ENCODE measurements at regions of chr13 and their contacts with region 1.

Region 1: DNA sequence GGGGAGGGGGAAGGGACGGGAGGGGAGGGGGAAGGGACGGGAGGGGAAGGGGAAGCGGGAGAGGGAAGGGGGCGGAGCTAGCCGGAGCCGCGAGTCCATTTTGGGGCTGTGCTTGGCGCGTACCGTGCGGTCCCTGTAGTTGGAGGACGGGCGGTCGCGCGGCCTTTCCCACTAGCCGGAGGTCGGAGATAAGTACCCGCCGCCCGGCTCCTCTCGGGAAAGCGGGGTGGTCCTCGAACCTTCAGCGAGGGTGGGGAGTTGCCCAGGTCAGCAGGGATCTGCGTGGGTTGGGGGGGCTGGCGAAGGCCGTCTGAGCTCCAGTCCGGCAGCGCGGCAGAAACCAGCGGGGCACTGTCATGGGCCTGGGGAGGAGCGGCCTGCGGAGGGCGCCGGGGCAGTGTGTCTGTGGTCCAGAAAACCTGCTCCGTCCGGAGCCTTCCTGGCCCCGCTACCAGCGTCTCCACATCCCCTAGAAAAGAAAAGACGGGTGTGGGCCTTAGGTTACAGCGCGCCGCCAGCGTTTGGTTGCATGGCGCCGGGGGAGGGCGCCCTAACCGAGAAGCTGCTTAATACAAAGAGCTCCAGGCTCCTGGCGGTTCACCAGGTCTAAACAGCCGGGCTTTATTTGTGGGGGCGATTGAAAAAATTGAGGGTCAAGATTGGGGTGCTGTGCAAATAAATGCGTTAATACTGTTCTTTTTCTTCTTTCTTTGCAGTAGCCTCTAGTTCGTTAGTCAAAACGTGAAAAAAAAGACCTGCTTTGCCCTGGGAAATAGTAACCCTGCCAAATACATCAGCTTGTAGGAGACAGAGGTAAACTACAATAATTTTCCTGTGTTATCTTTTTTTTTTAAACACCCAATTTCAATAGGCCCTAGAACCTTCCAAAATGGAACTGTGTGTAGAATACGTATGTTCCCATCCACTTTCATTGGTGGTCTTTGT is at the start of gene TRIM13:
- DNase-seq: peak; percentile 88
- H3K4me3 Mint-ChIP-seq: peak within 1 kb of the TSS; percentile 81
- H3K27ac Mint-ChIP-seq: peak within 1 kb of the TSS; percentile 86
- H3K4me1 Mint-ChIP-seq: peaks cover 44% of the 10 kb centered on the region
- H3K27me3 Mint-ChIP-seq: no peaks in the 10 kb centered on the region
- total RNA-seq, gene TRIM13: 9.8 to 11.6 TPM

Region 2: GRCh38 chr13:49836516-49836915 is 160.7 kb before region 1 on chr13:
- CTCF ChIA-PET with region 1: no interaction called
- POLR2A ChIA-PET with region 1: no interaction called
- intact Hi-C with region 1: no loop called
- DNase-seq: no peak
- H3K4me3 Mint-ChIP-seq: no peak overlapping the region
- H3K27ac Mint-ChIP-seq: no peak overlapping the region
- H3K4me1 Mint-ChIP-seq: no peaks in the 10 kb centered on the region
- H3K27me3 Mint-ChIP-seq: peaks cover 3% of the 10 kb centered on the region

Region 3: DNA sequence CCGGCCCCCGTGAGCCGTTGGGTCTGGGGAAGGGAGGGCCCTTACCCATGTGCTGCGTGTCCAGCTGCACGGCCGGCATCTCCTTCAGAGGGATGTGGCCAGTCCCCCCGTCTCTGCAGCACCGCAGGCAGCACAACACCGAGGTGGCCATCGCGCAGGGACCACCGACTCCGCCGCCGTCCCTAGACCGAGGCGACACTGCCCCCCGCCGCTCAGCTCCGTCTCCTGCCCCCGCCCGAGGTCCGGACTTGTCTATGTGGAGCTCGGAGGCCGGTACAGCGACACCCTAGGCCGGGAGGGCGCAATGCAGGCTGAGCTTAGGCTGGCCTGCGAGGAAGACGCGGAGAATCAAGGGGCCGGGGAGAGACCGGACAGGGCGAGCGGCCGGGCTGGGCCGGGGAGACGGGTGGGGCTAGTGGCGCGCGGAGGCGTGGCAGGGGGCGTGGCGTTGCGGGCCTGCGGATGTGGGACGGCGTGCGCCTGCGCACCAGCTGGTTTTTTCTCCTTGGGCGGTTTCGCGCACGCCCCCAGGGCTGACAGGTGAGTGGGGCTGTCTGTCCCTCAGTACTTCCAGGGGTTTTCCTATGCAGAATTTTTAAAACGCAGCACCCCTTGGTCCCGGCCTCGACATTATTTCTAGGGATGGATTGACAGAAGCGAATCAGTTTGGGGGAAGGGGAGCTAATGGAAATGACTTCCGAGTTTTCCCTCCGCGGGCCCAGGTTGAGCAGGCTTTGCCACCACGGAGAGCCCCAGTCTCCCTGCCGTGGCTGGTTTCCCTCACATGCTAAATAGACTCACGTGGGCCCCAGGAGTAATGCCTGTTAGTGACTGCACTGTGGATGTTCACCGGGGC is 60.9 kb before region 1 on chr13 and contains the start of gene SPRYD7:
- CTCF ChIA-PET with region 1: interaction called, 18 read pairs
- POLR2A ChIA-PET with region 1: interaction called, 7 read pairs
- intact Hi-C with region 1: loop called (anchors 1 kb)
- DNase-seq: peak; percentile 97
- H3K4me3 Mint-ChIP-seq: peak within 1 kb of the TSS; percentile 92
- H3K27ac Mint-ChIP-seq: peak within 1 kb of the TSS; percentile 77
- H3K4me1 Mint-ChIP-seq: peaks cover 12% of the 10 kb centered on the region
- H3K27me3 Mint-ChIP-seq: no peaks in the 10 kb centered on the region
- total RNA-seq, gene SPRYD7: 4.9 to 5.4 TPM

Region 4: GRCh38 chr13:50015258-50015657 is 18.0 kb after region 1 on chr13 and contains the start of gene KCNRG:
- CTCF ChIA-PET with region 1: interaction called, 11 read pairs
- POLR2A ChIA-PET with region 1: interaction called, 3 read pairs
- intact Hi-C with region 1: no loop called
- DNase-seq: no peak
- H3K4me3 Mint-ChIP-seq: no peak within 1 kb of the TSS
- H3K27ac Mint-ChIP-seq: no peak within 1 kb of the TSS
- H3K4me1 Mint-ChIP-seq: peaks cover 33% of the 10 kb centered on the region
- H3K27me3 Mint-ChIP-seq: no peaks in the 10 kb centered on the region
- total RNA-seq, gene KCNRG: not detected

Region 5: DNA sequence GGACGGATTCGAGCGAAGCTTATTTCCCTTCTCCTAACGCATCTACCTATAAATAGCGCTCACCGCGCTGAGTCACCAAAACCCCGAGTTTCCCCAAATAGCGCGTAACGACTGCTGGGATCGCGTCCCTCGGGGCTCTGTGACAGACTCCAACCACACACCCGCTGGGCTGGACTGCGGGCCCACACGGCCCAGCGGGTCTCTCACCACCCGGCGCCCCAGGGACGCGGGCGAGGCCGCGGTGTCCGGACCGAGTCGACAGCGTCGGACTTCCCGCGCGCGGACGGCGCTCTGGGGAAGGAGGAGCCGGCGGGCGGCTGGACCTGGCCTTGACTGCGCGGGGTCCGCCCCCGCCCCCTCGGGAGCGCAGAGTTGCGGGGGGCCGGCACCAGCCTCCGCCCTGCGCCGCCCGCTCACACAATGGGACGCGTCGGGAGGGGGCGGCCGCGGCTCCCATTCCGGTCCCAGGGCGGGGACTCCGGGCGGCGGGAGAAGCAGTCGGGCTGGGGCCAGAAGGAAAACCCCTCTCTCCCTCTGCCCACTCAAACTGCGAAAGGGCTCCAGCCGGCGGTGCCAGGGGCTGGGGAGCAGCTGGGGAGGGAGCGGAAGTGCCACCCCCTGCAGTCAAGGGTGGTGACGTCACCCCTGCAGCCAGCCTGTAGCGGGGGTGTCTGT is 126.8 kb after region 1 on chr13:
- CTCF ChIA-PET with region 1: interaction called, 20 read pairs
- POLR2A ChIA-PET with region 1: interaction called, 17 read pairs
- intact Hi-C with region 1: loop called (anchors 1 kb)
- DNase-seq: peak; percentile 88
- H3K4me3 Mint-ChIP-seq: peak overlapping the region; percentile 81
- H3K27ac Mint-ChIP-seq: peak overlapping the region; percentile 90
- H3K4me1 Mint-ChIP-seq: peaks cover 58% of the 10 kb centered on the region
- H3K27me3 Mint-ChIP-seq: peaks cover 16% of the 10 kb centered on the region

Region 6: GRCh38 chr13:50236898-50237318 is 239.7 kb after region 1 on chr13:
- CTCF ChIA-PET with region 1: no interaction called
- POLR2A ChIA-PET with region 1: no interaction called
- intact Hi-C with region 1: loop called (anchors 5 kb)
- DNase-seq: peak; percentile 55
- H3K4me3 Mint-ChIP-seq: peak overlapping the region; percentile 65
- H3K27ac Mint-ChIP-seq: peak overlapping the region; percentile 81
- H3K4me1 Mint-ChIP-seq: peaks cover 49% of the 10 kb centered on the region
- H3K27me3 Mint-ChIP-seq: peaks cover 23% of the 10 kb centered on the region

Region 7: DNA sequence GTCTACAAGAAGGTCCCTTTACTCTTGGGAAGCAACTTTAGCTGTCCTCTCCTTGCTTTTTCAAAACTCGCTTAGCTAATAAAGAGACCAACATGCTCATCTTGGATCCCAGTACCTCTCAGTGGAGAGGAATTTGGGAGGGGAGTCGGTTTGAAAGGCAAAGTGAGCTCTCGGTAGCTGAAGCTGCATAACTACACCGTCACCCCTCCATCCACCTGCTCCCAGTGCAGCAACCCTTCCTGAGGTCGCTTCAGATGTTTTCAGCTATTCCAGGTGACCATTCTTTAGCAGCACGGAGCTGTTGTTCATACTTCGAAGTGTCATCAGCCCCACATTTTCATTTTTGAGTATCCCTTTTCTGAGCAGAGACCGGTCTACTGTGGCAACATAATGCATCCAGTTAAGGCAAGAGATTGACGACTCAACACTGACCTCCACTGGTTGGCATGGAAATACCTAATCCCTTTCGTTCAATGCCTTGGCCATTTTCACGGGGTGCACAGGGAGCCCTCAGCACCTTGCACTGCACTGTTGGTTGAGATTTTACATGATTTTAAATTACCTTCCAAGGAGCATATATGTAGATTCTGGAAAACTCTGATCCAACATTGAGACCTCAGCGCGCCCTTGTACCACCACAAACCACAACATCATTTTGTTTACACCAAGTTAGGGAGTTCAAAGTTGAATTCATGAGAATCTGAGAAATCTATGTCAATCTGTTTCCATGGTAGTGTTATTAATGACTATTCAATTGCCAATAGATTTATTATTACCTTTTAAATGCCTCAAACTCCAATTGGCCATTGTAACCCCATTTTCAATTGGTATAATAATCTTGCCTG is 804.1 kb after region 1 on chr13:
- CTCF ChIA-PET with region 1: interaction called, 12 read pairs
- POLR2A ChIA-PET with region 1: no interaction called
- intact Hi-C with region 1: no loop called
- DNase-seq: peak; percentile 70
- H3K4me3 Mint-ChIP-seq: no peak overlapping the region
- H3K27ac Mint-ChIP-seq: no peak overlapping the region
- H3K4me1 Mint-ChIP-seq: peaks cover 4% of the 10 kb centered on the region
- H3K27me3 Mint-ChIP-seq: peaks cover 1% of the 10 kb centered on the region